Activated CD4-positive, alpha-beta memory T cell treated with anti-CD3 and anti-CD28 coated beads for 36 hours (primary cell): ENCODE measurements at regions of chr6 and their contacts with region 1.

Region 1: DNA sequence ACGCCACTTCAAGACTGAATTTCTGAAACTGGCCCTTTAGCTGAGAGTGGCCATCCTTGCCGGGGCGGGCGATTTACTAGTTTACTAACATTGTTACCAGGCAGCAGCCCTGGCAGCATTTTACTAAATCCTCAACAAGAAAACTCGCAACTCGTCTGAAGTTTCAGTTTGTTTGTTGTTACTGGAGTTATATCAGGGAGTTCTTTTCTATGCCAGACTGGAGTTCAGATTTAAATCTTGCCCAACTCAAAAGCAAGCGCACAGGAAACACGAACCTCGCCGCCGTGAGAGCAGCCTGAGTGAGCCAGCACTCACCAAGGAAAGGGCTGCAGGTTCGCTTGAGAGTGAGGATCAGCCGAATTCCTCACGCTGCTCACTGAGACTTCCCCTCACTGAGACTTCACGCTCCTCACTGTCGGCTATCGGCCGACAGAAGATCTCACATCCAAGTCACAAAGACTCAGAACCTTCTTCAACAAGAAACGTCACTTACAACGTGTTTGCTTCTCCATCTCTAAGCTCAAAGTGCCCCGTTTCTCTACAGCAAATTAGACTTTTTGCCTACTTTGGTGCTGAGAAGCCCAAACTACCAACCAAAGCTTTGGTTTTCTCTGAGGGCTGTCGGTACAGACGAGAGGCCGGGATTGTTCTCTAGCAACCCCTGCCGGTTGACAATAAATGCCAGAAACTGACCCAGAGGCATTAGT is 78.9 kb downstream of the OLIG3 start:
- DNase-seq: peak; percentile 78
- H3K4me3 Mint-ChIP-seq: peak overlapping the region; percentile 71
- H3K27ac Mint-ChIP-seq: peak overlapping the region; percentile 49
- H3K4me1 Mint-ChIP-seq: peaks cover 11% of the 10 kb centered on the region
- H3K27me3 Mint-ChIP-seq: peaks cover 3% of the 10 kb centered on the region

Region 2: DNA sequence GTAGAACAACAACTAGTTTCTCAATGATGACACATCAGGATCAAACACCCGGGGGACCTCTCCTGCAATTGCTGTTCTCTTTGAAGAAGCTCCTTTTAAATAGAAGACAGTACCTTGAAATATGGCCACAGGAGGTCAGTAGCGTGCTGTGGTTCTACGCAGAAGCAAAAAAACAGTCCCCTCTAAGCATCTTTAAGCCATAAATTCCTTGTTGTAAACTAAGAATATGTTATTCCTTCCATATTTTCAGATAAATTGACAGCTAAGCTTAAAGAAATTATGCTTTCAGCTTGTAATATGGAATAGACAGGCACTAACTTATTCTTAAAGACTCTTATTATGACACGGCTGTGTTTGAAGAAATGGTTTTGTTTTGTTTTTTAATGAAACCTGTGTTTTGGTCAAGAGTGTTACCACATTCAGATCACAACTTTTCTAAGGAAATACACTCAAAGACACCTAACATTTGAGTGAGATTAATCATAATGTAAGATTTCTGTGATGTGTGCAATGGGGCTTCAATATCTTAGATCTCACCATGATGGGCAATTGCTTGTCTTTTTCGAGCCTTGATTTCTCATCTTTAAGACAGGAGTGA is 320.8 kb before region 1 on chr6:
- CTCF ChIA-PET with region 1: interaction called, 16 read pairs
- POLR2A ChIA-PET with region 1: no interaction called
- intact Hi-C with region 1: loop called (anchors 1 kb)
- DNase-seq: peak; percentile 68
- H3K4me3 Mint-ChIP-seq: no peak overlapping the region
- H3K27ac Mint-ChIP-seq: no peak overlapping the region
- H3K4me1 Mint-ChIP-seq: peaks cover 22% of the 10 kb centered on the region
- H3K27me3 Mint-ChIP-seq: peaks cover 2% of the 10 kb centered on the region

Region 3: GRCh38 chr6:137271245-137272183 is 143.8 kb before region 1 on chr6:
- CTCF ChIA-PET with region 1: interaction called, 9 read pairs
- POLR2A ChIA-PET with region 1: no interaction called
- intact Hi-C with region 1: loop called (anchors 1 kb)
- DNase-seq: no peak
- H3K4me3 Mint-ChIP-seq: no peak overlapping the region
- H3K27ac Mint-ChIP-seq: no peak overlapping the region
- H3K4me1 Mint-ChIP-seq: peaks cover 10% of the 10 kb centered on the region
- H3K27me3 Mint-ChIP-seq: peaks cover 5% of the 10 kb centered on the region

Region 4: GRCh38 chr6:137341681-137342195 is 73.5 kb before region 1 on chr6:
- CTCF ChIA-PET with region 1: interaction called, 44 read pairs
- POLR2A ChIA-PET with region 1: no interaction called
- intact Hi-C with region 1: loop called (anchors 1 kb)
- DNase-seq: peak; percentile 66
- H3K4me3 Mint-ChIP-seq: peak overlapping the region; percentile 11
- H3K27ac Mint-ChIP-seq: no peak overlapping the region
- H3K4me1 Mint-ChIP-seq: peaks cover 13% of the 10 kb centered on the region
- H3K27me3 Mint-ChIP-seq: peaks cover 4% of the 10 kb centered on the region

Region 5: DNA sequence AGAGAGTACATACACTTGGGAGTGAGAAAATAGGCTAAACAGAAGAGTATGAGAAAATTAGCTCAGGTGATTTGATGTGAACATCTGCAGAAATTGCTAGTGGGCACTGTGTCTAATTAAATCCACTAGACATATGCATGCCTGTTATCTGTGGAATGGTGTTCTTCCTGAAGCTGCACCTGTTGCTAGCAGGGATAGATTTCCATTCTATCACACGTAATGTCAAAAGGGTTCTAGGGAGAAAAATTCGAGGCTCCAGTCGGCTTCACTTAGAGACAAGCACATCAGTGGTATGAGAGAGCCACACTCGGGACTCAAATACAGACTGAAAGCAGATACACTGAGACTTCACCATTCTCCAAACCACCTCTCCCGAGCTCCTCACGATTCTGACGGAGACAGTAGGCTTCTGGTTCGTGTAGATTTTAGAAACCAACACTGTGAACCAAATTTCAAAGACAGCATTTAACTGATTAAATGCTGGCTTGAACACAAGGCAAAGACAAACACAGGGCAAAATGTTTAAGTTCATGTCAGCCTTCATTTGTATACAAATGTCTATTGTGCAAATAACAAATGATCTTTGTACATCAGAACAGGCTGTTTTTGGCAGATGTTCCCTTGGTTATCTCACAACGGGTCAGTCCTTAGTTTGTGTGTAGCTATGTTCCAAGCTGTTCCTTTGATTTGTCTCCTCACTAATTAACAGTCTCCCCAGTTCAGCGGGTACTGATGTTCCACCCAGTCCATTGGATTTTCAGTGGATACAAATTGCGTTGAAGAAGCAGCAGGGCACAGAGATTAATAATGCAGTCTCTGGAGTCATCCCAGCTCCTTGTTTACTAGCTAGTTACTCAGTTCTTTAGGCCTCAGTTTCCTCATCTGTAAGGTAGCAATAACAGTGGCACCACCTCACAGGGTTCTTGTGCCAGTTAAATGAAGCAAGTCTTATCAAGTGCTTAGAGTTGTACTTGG is 65.1 kb before region 1 on chr6:
- CTCF ChIA-PET with region 1: interaction called, 14 read pairs
- POLR2A ChIA-PET with region 1: no interaction called
- intact Hi-C with region 1: no loop called
- DNase-seq: no peak
- H3K4me3 Mint-ChIP-seq: no peak overlapping the region
- H3K27ac Mint-ChIP-seq: no peak overlapping the region
- H3K4me1 Mint-ChIP-seq: peaks cover 16% of the 10 kb centered on the region
- H3K27me3 Mint-ChIP-seq: no peaks in the 10 kb centered on the region

Region 6: GRCh38 chr6:137389150-137389704 is 26.1 kb before region 1 on chr6:
- CTCF ChIA-PET with region 1: interaction called, 4 read pairs
- POLR2A ChIA-PET with region 1: no interaction called
- intact Hi-C with region 1: loop called (anchors 1 kb)
- DNase-seq: peak; percentile 90
- H3K4me3 Mint-ChIP-seq: peak overlapping the region; percentile 40
- H3K27ac Mint-ChIP-seq: peak overlapping the region; percentile 80
- H3K4me1 Mint-ChIP-seq: peaks cover 56% of the 10 kb centered on the region
- H3K27me3 Mint-ChIP-seq: no peaks in the 10 kb centered on the region